ENCODE measurements at regions of chr9 and their contacts with region 1.

Region 1: GRCh38 chr9:101530077-101530711 is 3.5 kb upstream of the RNF20 start:
- DNase-seq: peak; percentile 41
- H3K4me3 ChIP-seq: no peak overlapping the region
- H3K27ac ChIP-seq: no peak overlapping the region
- H3K4me1 ChIP-seq: peaks cover 20% of the 10 kb centered on the region
- H3K27me3 ChIP-seq: no peaks in the 10 kb centered on the region
- CTCF ChIP-seq: peak; percentile 87

Region 2: DNA sequence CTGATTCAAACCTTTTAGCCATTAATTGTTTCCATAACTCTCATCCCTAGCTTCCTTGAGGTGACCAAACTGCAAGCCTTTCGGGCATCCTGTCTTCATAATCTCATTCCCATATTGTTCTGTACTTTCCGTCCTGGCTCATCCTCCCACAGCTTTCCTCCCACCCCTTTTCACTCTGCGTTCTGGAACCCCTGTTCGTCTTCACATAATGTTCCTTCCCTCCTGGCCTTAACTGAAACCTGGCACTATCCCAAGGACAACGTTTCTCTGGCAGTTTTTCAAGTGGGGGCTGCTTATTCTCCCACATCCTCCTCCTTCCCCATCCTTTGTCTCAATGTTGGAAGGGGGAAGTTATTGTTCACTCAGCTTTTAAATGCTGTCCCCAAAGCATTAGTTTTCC is 130.1 kb before region 1 on chr9:
- intact Hi-C with region 1: loop called (anchors 10 kb)
- DNase-seq: peak; percentile 30
- H3K4me3 ChIP-seq: peak overlapping the region; percentile 85
- H3K27ac ChIP-seq: peak overlapping the region; percentile 93
- H3K4me1 ChIP-seq: peaks cover 73% of the 10 kb centered on the region
- H3K27me3 ChIP-seq: no peaks in the 10 kb centered on the region
- CTCF ChIP-seq: no peak

Region 3: DNA sequence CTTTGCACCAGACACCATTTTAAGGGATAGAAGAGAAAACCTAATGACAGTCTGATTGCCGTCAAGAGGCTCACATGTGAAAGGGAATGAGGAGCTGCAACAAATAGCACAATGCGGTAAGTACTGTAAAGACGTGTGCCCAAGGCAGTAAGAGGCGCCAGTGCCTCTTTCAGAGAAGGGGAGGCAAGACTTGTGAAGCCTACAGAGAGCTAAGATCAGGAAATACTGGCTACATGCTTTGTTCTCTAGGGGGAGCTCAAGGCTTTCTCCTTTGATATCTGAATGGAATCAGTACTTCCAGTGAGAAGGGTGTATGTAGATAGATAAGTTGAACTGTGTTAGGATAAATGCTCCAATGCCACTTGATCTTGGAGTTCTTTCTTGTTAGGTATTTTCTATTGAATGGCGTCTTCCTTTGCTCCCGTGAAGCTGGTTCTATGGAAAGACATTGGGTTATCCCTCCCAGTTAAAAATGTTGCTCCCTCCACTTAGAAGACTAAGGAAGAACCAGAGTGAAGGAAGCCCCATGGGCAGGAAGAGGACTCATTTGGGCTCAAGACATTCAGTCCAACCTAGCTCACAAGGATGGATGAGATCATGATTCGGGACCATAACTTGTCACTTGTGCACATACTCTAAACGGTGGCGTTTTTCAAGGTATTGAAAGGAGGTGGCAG is 71.1 kb before region 1 on chr9:
- intact Hi-C with region 1: loop called (anchors 5 kb)
- DNase-seq: no peak
- H3K4me3 ChIP-seq: no peak overlapping the region
- H3K27ac ChIP-seq: no peak overlapping the region
- H3K4me1 ChIP-seq: no peaks in the 10 kb centered on the region
- H3K27me3 ChIP-seq: no peaks in the 10 kb centered on the region
- CTCF ChIP-seq: peak; percentile 79

Measured in left ventricle myocardium inferior (tissue), 1 donor.